Endothelial cell of umbilical vein (primary cell): ENCODE measurements at regions of chr22 and their contacts with region 1.

Region 1: DNA sequence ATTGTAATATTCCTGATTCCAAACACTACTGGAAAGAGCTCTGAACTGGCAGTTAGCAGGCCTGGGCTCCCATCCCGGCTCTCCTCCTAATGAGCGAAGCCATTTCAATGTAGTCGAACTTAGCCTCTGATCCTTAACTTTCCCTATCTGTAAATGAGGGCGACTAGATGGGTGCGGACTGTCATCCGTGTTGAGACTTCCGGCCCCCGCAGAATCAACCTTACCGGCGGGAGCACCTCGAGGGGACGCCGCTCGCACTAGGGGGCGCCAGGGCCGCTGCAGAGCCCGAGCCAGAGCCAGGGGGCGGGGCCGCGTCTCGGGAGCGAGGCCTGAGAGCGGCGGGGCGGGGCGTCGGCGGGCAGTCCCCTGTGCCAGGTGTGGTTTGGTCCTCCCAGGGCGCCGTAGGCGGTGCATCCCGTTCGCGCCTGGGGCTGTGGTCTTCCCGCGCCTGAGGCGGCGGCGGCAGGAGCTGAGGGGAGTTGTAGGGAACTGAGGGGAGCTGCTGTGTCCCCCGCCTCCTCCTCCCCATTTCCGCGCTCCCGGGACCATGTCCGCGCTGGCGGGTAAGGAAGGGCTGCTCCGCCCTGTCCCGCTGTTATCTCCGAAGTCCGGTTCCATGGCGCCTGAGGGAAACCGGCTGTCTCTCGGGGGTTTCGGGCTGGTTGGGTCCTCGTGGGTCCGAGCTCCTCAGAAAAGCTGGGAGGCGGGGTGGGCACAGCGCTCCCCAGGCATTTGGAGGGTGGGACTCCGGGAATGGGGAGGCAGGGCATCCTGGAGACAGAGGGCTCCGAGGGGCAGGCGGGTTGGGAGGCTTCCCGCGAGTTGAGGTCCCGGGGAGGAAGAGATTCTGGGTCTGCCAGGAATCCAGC is at the start of gene LIMK2:
- DNase-seq: peak; percentile 88
- H3K4me3 ChIP-seq: peak within 1 kb of the TSS; percentile 86 to 97 (median 92)
- H3K27ac ChIP-seq: peak within 1 kb of the TSS; percentile 93
- H3K4me1 ChIP-seq: peaks cover 60% of the 10 kb centered on the region
- H3K27me3 ChIP-seq: no peaks in the 10 kb centered on the region
- CTCF ChIP-seq: peak; percentile 76 to 85
- POLR2A ChIP-seq: peak; percentile 88
- total RNA-seq, gene LIMK2: 71.7 and 76.7 TPM in 2 replicates

Region 2: DNA sequence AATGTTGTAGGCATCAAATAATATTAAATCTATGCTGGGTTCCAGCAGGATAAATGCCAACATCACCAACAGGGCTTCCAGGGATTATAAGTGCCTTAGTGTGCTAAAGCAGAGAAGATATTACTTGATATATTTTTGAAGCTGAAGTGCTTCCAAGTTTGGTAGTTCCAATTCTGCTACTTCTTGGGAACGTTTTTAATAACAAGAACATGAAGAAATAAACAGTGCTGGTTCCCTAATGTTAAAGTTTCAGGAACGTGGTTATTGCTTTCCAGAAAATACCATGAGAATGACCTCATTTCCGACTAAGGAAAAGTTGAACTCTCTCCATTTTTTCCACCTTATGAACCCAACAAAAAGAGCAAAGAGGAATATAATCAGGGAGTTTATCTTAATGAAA is 56.7 kb before region 1 on chr22:
- CTCF ChIA-PET with region 1: interaction called, 8 read pairs
- POLR2A ChIA-PET with region 1: no interaction called
- dilution Hi-C with region 1: no loop called
- intact Hi-C with region 1: loop called (anchors 5 kb)
- DNase-seq: peak; percentile 66
- H3K4me3 ChIP-seq: no peak overlapping the region
- H3K27ac ChIP-seq: peak overlapping the region; percentile 63
- H3K4me1 ChIP-seq: peaks cover 13% of the 10 kb centered on the region
- H3K27me3 ChIP-seq: no peaks in the 10 kb centered on the region
- CTCF ChIP-seq: no peak
- POLR2A ChIP-seq: no peak

Region 3: GRCh38 chr22:31173386-31174145 is 38.5 kb before region 1 on chr22:
- CTCF ChIA-PET with region 1: no interaction called
- POLR2A ChIA-PET with region 1: no interaction called
- dilution Hi-C with region 1: no loop called
- intact Hi-C with region 1: loop called (anchors 1 kb)
- DNase-seq: peak; percentile 68
- H3K4me3 ChIP-seq: no peak overlapping the region
- H3K27ac ChIP-seq: peak overlapping the region; percentile 78
- H3K4me1 ChIP-seq: peaks cover 22% of the 10 kb centered on the region
- H3K27me3 ChIP-seq: no peaks in the 10 kb centered on the region
- CTCF ChIP-seq: no peak
- POLR2A ChIP-seq: no peak

Region 4: DNA sequence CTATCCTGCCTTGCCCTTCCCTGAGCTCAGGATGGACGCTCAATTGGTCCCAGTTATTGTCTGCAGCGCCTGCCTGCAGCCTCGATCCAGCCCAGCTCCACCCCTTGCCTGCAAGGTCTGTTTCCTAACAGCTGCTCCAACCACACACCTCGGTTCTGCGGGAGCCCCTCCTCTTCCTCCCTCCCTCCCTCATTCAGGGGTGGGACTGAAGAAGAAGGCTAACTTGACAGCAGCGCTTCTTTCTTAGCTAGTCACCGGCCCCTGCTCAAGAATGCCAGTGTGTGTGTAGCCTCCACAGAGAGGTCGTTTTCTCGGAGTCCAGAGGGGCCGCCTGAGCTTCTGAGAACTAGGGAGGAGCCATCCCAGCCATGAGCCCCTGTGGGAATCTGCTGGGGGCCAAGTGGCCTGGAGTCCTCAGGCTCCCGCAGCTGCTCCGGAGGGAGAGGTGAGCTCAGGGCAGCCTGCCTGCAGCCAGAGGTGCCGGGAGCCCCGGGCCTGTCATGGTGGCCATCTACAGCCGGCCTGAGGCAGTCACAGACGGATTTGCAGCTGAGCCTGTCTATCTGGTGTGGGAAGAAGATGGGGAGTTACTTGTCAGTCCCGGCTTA is 36.1 kb after region 1 on chr22:
- CTCF ChIA-PET with region 1: interaction called, 26 read pairs
- POLR2A ChIA-PET with region 1: no interaction called
- dilution Hi-C with region 1: no loop called
- intact Hi-C with region 1: no loop called
- DNase-seq: peak; percentile 60
- H3K4me3 ChIP-seq: no peak overlapping the region
- H3K27ac ChIP-seq: no peak overlapping the region
- H3K4me1 ChIP-seq: peaks cover 23% of the 10 kb centered on the region
- H3K27me3 ChIP-seq: no peaks in the 10 kb centered on the region
- CTCF ChIP-seq: no peak
- POLR2A ChIP-seq: no peak

Region 5: DNA sequence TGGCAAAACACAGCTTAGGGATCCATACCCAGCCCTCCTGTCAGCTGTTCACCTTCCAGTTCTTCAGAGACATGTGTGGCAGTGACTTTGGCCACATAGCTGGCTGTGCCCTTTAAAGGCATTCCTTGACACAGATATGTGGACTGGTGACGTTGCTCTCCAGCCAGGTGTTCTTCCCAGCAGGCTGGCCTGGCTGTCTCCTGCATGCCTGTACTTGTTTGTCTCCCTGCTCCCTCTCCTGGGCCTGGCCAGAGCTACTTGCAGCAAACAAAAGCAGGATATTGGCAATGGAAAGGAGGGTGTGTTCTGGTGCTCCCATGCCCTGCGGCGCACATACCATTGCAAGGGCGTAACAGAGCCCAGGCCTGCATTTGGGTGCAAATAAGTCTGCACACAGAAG is 41.9 kb after region 1 on chr22:
- CTCF ChIA-PET with region 1: interaction called, 12 read pairs
- POLR2A ChIA-PET with region 1: no interaction called
- dilution Hi-C with region 1: no loop called
- intact Hi-C with region 1: no loop called
- DNase-seq: peak; percentile 82
- H3K4me3 ChIP-seq: no peak overlapping the region
- H3K27ac ChIP-seq: peak overlapping the region; percentile 32
- H3K4me1 ChIP-seq: peaks cover 8% of the 10 kb centered on the region
- H3K27me3 ChIP-seq: no peaks in the 10 kb centered on the region
- CTCF ChIP-seq: peak in 1 of 2 donors; percentile 27
- POLR2A ChIP-seq: no peak

Region 6: GRCh38 chr22:31290494-31291471 is 78.7 kb after region 1 on chr22:
- CTCF ChIA-PET with region 1: interaction called, 8 read pairs
- POLR2A ChIA-PET with region 1: no interaction called
- dilution Hi-C with region 1: no loop called
- intact Hi-C with region 1: loop called (anchors 5 kb)
- DNase-seq: peak; percentile 96
- H3K4me3 ChIP-seq: peak overlapping the region; percentile 41 to 69 (median 45)
- H3K27ac ChIP-seq: peak overlapping the region; percentile 50
- H3K4me1 ChIP-seq: peaks cover 41% of the 10 kb centered on the region
- H3K27me3 ChIP-seq: no peaks in the 10 kb centered on the region
- CTCF ChIP-seq: no peak
- POLR2A ChIP-seq: no peak